ENCODE measurements at regions of chrX and their contacts with region 1.

Region 1: DNA sequence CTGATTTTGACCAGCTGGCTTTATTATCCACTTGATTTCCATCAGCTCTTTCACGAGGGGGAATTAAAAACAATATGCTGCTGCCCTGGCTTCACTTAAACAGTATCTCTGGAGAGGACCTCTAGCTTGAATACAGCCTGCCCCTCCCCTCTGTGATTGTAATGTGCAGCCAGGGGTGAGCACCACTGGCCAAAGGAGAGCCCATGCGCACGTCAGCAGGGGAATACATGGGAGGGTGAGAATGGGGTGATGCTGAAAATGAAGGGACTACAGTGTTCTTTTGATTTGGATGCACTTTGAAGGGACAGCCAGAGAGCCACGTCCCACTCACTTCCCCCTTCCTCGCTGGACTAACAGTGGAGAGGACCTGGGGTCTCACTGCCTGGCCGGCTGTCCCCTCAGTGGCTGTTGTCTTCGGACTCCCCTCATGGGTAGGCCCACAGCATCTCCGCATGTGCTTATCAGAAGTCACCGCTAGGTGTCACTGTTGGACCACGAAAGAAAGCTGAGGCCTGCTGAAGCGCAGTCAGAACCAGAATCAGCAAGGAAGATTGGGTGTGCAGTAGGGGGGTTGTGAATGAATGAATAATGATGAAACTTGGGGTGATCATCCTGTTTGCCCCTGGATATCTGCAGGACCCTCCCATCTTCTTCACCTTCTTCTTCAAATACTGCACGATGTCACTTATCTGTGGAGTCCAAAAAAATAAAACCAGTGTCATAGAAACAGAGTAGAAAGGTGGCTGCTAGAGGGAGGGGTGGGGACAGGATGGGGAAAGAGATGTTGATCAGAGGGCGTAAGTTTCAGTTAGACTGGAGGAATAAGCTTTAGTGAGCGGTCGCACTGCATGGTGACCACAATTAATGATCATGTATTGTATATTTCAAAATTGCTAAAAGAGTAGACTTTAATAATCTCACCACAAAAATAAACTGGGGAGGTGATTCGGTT is 32.8 kb downstream of the CLCN4 start:
- DNase-seq: peak; percentile 44
- H3K4me3 Mint-ChIP-seq: no peak overlapping the region
- H3K27ac Mint-ChIP-seq: peak overlapping the region; percentile 53
- H3K4me1 Mint-ChIP-seq: no peaks in the 10 kb centered on the region
- H3K27me3 Mint-ChIP-seq: peaks cover 8% of the 10 kb centered on the region

Region 2: GRCh38 chrX:10597871-10598270 is 408.3 kb after region 1 on chrX:
- intact Hi-C with region 1: loop called (anchors 1 kb)
- DNase-seq: no peak
- H3K4me3 Mint-ChIP-seq: no peak overlapping the region
- H3K27ac Mint-ChIP-seq: no peak overlapping the region
- H3K4me1 Mint-ChIP-seq: no peaks in the 10 kb centered on the region
- H3K27me3 Mint-ChIP-seq: no peaks in the 10 kb centered on the region

Region 3: DNA sequence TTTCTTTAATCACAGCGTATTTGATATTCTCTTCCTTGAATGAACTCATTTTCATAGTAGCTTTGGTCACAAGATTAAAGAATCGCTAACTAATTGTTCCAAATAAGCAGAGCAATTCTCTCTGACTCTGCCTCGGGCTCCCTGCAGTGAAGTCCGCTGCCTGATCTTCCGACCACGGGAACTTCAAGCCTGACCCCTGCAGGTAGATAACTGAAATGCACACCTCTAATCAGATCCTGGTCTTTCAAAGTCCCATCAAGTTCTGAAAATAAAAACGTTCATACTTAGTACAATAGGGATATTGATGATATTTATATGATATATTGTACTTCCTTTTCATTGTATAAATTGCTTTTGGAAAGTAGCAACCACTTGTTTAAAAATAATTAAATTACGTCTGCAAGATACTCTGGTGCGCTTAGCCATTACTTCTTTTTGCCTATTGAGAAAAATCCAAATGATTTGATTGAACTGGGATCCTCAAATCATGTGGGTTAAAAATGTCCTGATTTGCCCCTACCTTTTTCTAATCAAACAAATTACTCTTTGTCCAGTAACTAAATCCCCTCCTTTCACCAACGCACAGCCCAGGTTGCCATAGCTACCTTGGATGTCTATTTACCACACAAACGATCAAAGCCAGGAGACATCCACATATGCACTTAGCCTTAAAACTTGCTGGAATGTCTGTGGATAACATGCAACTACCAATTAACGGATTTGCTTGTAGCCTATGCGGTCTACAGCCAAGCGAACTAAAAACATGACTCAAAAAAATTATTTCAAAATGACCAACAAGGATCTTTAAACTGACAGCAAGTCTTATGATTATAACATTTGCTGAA is 426.6 kb after region 1 on chrX:
- intact Hi-C with region 1: loop called (anchors 1 kb)
- DNase-seq: no peak
- H3K4me3 Mint-ChIP-seq: no peak overlapping the region
- H3K27ac Mint-ChIP-seq: no peak overlapping the region
- H3K4me1 Mint-ChIP-seq: peaks cover 10% of the 10 kb centered on the region
- H3K27me3 Mint-ChIP-seq: peaks cover 29% of the 10 kb centered on the region

Region 4: GRCh38 chrX:10722851-10723250 is 533.3 kb after region 1 on chrX:
- intact Hi-C with region 1: loop called (anchors 1 kb)
- DNase-seq: no peak
- H3K4me3 Mint-ChIP-seq: no peak overlapping the region
- H3K27ac Mint-ChIP-seq: no peak overlapping the region
- H3K4me1 Mint-ChIP-seq: no peaks in the 10 kb centered on the region
- H3K27me3 Mint-ChIP-seq: no peaks in the 10 kb centered on the region

Region 5: GRCh38 chrX:10769195-10769594 is 579.6 kb after region 1 on chrX:
- intact Hi-C with region 1: loop called (anchors 1 kb)
- DNase-seq: no peak
- H3K4me3 Mint-ChIP-seq: no peak overlapping the region
- H3K27ac Mint-ChIP-seq: no peak overlapping the region
- H3K4me1 Mint-ChIP-seq: no peaks in the 10 kb centered on the region
- H3K27me3 Mint-ChIP-seq: no peaks in the 10 kb centered on the region

Region 6: GRCh38 chrX:11137543-11138139 is 948.0 kb after region 1 on chrX:
- intact Hi-C with region 1: loop called (anchors 1 kb)
- DNase-seq: no peak
- H3K4me3 Mint-ChIP-seq: no peak overlapping the region
- H3K27ac Mint-ChIP-seq: no peak overlapping the region
- H3K4me1 Mint-ChIP-seq: no peaks in the 10 kb centered on the region
- H3K27me3 Mint-ChIP-seq: no peaks in the 10 kb centered on the region

Region 7: GRCh38 chrX:11533211-11533651 is 1343.6 kb after region 1 on chrX:
- intact Hi-C with region 1: loop called (anchors 5 kb)
- DNase-seq: no peak
- H3K4me3 Mint-ChIP-seq: no peak overlapping the region
- H3K27ac Mint-ChIP-seq: no peak overlapping the region
- H3K4me1 Mint-ChIP-seq: no peaks in the 10 kb centered on the region
- H3K27me3 Mint-ChIP-seq: peaks cover 8% of the 10 kb centered on the region